RWPE1 (cell line): ENCODE measurements at regions of chr1 and their contacts with region 1.

Region 1: DNA sequence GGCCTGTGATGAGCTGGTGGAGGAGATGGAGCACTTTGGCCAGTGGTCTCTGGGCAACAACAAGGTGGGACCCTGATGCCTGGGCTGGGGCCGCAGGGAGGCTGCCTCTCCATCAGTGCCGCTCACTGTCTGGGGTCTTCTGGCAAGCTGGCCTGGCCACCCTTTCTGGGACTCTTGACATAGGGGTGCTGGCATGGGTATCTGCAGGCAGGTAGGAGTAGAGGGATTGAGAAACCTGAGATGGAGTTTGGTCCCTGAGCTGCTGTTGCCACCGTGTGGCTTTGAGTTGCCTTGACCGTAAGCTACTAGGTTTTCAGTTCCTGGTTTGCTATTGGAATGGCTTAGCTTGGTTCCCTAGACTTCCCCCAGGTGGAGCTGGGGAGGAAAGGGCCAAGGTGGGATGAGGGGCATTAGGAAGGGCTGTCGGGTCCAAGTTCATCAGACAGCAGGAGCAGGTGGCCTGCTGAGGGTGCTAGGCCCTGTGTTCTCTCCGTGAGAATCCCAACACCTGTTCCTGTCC is 13.2 kb upstream of the MFN2 start:
- DNase-seq: peak; percentile 77
- H3K27ac ChIP-seq: peak overlapping the region; percentile 76
- CTCF ChIP-seq: peak; percentile 48

Region 2: DNA sequence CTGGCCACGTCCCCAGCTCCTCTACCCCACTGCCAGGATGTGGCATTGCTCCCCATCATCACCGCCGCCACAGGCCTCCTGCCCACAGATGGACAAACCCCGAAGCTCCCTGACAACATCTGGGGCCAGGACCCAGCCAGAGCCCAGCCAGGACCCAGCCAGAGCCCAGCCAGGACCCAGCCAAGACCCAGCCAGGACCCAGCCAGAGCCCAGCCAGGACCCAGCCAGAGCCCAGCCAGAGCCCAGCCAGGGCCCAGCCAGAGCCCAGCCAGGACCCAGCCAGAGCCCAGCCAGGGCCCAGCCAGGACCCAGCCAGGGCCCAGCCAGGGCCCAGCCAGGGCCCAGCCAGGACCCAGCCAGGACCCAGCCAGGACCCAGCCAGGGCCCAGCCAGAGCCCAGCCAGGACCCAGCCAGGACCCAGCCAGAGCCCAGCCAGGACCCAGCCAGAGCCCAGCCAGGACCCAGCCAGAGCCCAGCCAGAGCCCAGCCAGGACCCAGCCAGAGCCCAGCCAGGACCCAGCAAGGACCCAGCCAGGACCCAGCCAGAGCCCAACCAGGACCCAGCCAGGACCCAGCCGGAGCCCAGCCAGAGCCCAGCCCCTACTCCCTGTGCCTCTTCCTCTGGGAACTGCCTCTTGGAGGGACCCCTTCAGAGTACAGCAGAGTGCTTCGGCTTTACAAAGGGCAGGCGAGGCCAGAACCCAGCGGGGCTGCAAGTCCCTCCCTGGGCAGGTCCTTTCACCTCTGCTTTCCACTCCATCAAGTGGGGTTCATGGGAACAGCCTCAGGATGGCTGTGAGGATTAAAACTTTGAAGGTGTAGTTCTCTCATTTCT is 444.5 kb before region 1 on chr1:
- CTCF ChIA-PET with region 1: no interaction called
- POLR2A ChIA-PET with region 1: no interaction called
- DNase-seq: no peak
- H3K27ac ChIP-seq: no peak overlapping the region
- CTCF ChIP-seq: no peak

Region 3: DNA sequence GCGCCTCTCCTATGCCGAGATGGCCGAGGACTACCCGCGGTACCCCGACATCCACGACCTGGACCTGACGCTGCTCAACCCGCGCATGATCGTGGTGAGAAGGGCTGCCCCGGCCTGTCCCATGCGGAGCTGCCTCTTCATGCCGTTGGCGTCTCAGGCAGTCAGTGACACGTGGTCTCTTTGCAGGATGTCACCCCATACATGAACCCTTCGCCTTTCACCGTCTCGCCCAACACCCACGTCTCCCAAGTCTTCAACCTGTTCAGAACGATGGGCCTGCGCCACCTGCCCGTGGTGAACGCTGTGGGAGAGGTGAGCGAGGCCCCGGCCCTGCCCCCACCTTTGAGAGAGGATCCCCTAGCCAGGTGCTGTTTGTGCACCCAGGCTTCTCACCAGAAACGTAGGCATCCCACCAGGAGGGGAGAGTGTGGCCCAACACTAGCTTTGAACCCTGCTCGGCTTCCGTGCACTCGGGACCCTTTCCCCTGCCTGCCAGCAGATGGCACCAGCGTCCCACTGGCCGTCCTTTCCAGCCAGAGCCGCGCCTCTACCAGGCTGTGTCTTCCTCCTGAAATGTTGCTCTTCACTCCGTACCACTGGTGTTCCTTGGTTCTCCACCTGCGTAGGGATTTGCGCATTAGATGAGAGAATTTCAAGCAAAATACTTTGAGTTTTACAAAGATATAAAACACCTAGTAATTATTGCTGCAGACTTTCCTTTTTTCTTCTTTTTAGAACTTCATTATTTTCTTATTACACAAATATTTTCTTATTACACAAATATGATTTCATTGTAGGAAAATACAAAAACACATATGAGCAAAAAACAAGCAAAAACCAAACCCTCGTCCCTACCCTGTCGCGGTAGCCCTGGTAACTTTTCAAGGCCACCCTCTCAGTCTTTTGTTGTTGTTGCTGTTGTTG is 128.5 kb before region 1 on chr1:
- CTCF ChIA-PET with region 1: interaction called, 16 read pairs
- POLR2A ChIA-PET with region 1: no interaction called
- DNase-seq: peak; percentile 84
- H3K27ac ChIP-seq: peak overlapping the region; percentile 28
- CTCF ChIP-seq: peak; percentile 99

Region 4: DNA sequence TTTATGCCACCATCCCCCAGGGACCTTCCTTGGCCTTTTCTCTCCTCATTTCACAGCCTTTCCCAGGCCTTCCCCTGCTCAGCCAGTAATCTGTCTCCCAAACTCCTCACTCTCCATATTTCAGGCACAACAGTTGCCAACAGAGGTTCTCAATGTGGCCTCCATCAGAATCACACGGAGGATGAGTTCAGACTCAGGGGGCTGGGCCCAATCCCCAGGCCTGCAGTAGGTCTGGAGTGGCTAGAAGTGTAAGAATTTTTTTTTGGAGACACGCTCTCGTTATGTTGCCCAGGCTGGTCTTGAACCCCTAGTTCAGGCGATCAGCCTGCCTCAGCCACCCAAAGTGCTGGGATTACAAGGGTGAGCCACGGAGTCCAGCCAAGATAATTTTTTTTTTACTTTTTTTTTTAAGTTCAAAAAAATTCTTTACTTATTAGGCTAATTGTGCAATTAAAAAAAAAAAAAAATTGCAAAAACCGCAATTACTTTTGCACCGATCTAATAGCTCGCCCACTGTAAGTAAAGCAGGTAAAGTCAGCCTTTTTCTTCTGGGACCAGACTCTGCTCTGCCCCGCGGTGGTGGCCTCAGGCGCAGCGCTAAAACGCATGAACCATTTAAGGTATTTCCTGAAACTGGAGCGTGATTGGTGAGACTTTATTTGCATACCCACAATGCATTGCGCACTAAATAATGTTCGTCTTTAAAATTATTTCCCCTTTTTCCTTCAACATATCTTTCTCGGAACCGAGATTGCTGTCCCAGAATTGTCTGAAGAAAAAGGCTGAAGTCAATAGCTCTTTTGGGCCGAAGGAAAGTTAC is 59.6 kb before region 1 on chr1:
- CTCF ChIA-PET with region 1: interaction called, 14 read pairs
- POLR2A ChIA-PET with region 1: interaction called, 13 read pairs
- DNase-seq: peak; percentile 86
- H3K27ac ChIP-seq: peak overlapping the region; percentile 100
- CTCF ChIP-seq: peak; percentile 92